Activated naive CD4-positive, alpha-beta T cell treated with anti-CD3 and anti-CD28 coated beads for 36 hours (primary cell): ENCODE measurements at regions of chr22 and their contacts with region 1.

Region 1: DNA sequence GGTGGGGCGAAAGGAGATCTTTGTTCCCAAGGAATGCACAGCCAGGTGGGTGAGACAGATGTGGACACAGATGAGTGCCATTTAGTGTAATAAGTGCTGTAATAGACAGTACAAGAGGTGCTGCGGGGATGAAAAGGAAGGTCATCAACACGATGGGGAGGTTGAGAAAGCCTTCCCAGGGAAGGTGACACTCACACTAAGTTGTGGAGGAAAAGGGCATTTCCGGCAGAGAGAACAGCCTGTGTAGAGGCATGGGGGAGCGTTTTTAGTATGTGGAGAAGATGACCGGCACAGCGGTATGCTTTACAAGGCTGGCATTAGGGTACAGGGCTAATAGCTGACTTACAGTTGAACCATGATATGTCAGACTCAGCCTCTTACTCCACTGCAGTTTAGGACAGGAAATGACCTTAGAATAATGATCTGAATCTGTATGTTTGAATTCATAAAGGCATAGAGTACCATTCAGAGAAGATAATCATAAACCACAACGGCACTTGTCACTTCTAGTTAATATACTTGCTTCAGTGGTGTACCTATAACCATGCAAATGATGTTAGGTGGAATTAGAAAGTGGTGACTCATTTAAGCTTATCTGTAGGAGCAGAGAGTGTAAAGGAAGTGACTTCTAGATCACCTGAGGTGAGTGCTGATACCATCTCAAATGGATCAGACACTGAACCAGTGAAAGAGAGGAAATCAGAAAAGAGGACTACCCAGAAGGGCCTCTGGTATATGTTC is 60.6 kb downstream of the FAM83F start:
- DNase-seq: peak; percentile 28
- H3K4me3 Mint-ChIP-seq: peak overlapping the region; percentile 69
- H3K27ac Mint-ChIP-seq: peak overlapping the region; percentile 95
- H3K4me1 Mint-ChIP-seq: peaks cover 80% of the 10 kb centered on the region
- H3K27me3 Mint-ChIP-seq: no peaks in the 10 kb centered on the region

Region 2: GRCh38 chr22:39943337-39943736 is 112.0 kb before region 1 on chr22:
- CTCF ChIA-PET with region 1: no interaction called
- intact Hi-C with region 1: no loop called
- DNase-seq: peak; percentile 80
- H3K4me3 Mint-ChIP-seq: peak overlapping the region; percentile 34
- H3K27ac Mint-ChIP-seq: peak overlapping the region; percentile 95
- H3K4me1 Mint-ChIP-seq: peaks cover 95% of the 10 kb centered on the region
- H3K27me3 Mint-ChIP-seq: no peaks in the 10 kb centered on the region

Region 3: GRCh38 chr22:40021401-40022000 is 33.8 kb before region 1 on chr22:
- CTCF ChIA-PET with region 1: no interaction called
- intact Hi-C with region 1: no loop called
- DNase-seq: no peak
- H3K4me3 Mint-ChIP-seq: no peak overlapping the region
- H3K27ac Mint-ChIP-seq: no peak overlapping the region
- H3K4me1 Mint-ChIP-seq: no peaks in the 10 kb centered on the region
- H3K27me3 Mint-ChIP-seq: no peaks in the 10 kb centered on the region

Region 4: GRCh38 chr22:40036591-40037225 is 18.6 kb before region 1 on chr22:
- CTCF ChIA-PET with region 1: no interaction called
- intact Hi-C with region 1: no loop called
- DNase-seq: peak; percentile 71
- H3K4me3 Mint-ChIP-seq: no peak overlapping the region
- H3K27ac Mint-ChIP-seq: no peak overlapping the region
- H3K4me1 Mint-ChIP-seq: no peaks in the 10 kb centered on the region
- H3K27me3 Mint-ChIP-seq: no peaks in the 10 kb centered on the region

Region 5: GRCh38 chr22:40094485-40094884 is 39.2 kb after region 1 on chr22:
- CTCF ChIA-PET with region 1: no interaction called
- intact Hi-C with region 1: loop called (anchors 5 kb)
- DNase-seq: no peak
- H3K4me3 Mint-ChIP-seq: peak overlapping the region; percentile 65
- H3K27ac Mint-ChIP-seq: peak overlapping the region; percentile 76
- H3K4me1 Mint-ChIP-seq: peaks cover 67% of the 10 kb centered on the region
- H3K27me3 Mint-ChIP-seq: no peaks in the 10 kb centered on the region

Region 6: GRCh38 chr22:40116496-40117200 is 61.3 kb after region 1 on chr22:
- CTCF ChIA-PET with region 1: interaction called, 3 read pairs
- intact Hi-C with region 1: loop called (anchors 1 kb)
- DNase-seq: peak; percentile 66
- H3K4me3 Mint-ChIP-seq: peak overlapping the region; percentile 28
- H3K27ac Mint-ChIP-seq: peak overlapping the region; percentile 46
- H3K4me1 Mint-ChIP-seq: peaks cover 84% of the 10 kb centered on the region
- H3K27me3 Mint-ChIP-seq: no peaks in the 10 kb centered on the region

Region 7: DNA sequence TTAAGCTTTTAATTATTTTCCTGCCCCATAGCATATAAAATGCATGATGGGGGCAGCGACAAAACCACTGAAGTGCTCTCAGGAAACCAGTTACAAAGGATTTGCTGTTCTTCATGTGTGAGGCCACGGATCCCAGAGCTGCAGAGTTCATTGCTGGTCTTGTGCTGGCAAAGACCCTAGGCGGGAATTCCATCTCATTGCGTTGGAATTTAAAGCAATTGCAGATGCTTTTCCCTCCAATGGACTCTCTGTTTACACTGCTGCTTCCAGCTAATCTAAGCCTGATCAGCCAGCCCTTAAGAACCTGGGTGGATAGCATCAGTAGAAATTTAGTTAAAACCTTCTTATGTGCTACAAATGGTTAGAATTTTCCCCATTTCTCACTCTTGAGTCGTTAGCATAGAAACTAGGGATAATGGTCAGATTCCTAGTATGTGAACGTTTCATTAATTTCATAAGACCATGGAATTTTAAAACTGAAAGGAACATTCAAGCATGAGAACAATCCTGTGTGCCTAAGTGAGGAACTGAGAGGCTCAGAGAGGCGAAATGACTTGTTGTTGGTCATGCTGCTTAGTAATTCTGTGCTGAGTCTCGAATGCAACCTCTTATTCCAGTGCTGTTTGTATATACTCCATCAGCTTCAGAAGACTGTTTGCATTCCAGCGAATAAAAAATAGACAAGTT is 254.9 kb after region 1 on chr22:
- CTCF ChIA-PET with region 1: no interaction called
- intact Hi-C with region 1: no loop called
- DNase-seq: no peak
- H3K4me3 Mint-ChIP-seq: no peak overlapping the region
- H3K27ac Mint-ChIP-seq: no peak overlapping the region
- H3K4me1 Mint-ChIP-seq: peaks cover 32% of the 10 kb centered on the region
- H3K27me3 Mint-ChIP-seq: no peaks in the 10 kb centered on the region

Region 8: GRCh38 chr22:40326905-40327735 is 271.8 kb after region 1 on chr22:
- CTCF ChIA-PET with region 1: no interaction called
- intact Hi-C with region 1: loop called (anchors 5 kb)
- DNase-seq: no peak
- H3K4me3 Mint-ChIP-seq: peak overlapping the region; percentile 2
- H3K27ac Mint-ChIP-seq: peak overlapping the region; percentile 68
- H3K4me1 Mint-ChIP-seq: peaks cover 83% of the 10 kb centered on the region
- H3K27me3 Mint-ChIP-seq: no peaks in the 10 kb centered on the region